Activated CD8-positive, alpha-beta T cell treated with anti-CD3 and anti-CD28 coated beads for 36 hours (primary cell): ENCODE measurements at regions of chr19 and their contacts with region 1.

Region 1: GRCh38 chr19:17282488-17283255 is 971 bp downstream of the ANKLE1 start:
- DNase-seq: peak; percentile 91
- ATAC-seq: peak; percentile 93
- H3K4me3 Mint-ChIP-seq: peak overlapping the region; percentile 86
- H3K27ac Mint-ChIP-seq: peak overlapping the region; percentile 81
- H3K4me1 Mint-ChIP-seq: peaks cover 6% of the 10 kb centered on the region
- H3K27me3 Mint-ChIP-seq: no peaks in the 10 kb centered on the region
- CTCF ChIP-seq: peak; percentile 99

Region 2: GRCh38 chr19:17215125-17215971 is 67.3 kb before region 1 on chr19 and contains the start of gene USE1:
- CTCF ChIA-PET with region 1: interaction called, 10 read pairs
- POLR2A ChIA-PET with region 1: interaction called, 3 read pairs
- intact Hi-C with region 1: no loop called
- DNase-seq: peak; percentile 95
- ATAC-seq: peak; percentile 96
- H3K4me3 Mint-ChIP-seq: peak within 1 kb of the TSS; percentile 82
- H3K27ac Mint-ChIP-seq: peak within 1 kb of the TSS; percentile 97
- H3K4me1 Mint-ChIP-seq: peaks cover 15% of the 10 kb centered on the region
- H3K27me3 Mint-ChIP-seq: no peaks in the 10 kb centered on the region
- CTCF ChIP-seq: no peak
- total RNA-seq, gene USE1: 26.5 to 27.1 TPM

Region 3: GRCh38 chr19:17245244-17245984 is 37.3 kb before region 1 on chr19 and contains the start of gene NR2F6:
- CTCF ChIA-PET with region 1: no interaction called
- POLR2A ChIA-PET with region 1: no interaction called
- intact Hi-C with region 1: no loop called
- DNase-seq: no peak
- ATAC-seq: peak; percentile 35
- H3K4me3 Mint-ChIP-seq: peak within 1 kb of the TSS; percentile 79
- H3K27ac Mint-ChIP-seq: peak within 1 kb of the TSS; percentile 64
- H3K4me1 Mint-ChIP-seq: peaks cover 9% of the 10 kb centered on the region
- H3K27me3 Mint-ChIP-seq: peaks cover 7% of the 10 kb centered on the region
- CTCF ChIP-seq: no peak
- total RNA-seq, gene NR2F6: 7.0 TPM

Region 4: DNA sequence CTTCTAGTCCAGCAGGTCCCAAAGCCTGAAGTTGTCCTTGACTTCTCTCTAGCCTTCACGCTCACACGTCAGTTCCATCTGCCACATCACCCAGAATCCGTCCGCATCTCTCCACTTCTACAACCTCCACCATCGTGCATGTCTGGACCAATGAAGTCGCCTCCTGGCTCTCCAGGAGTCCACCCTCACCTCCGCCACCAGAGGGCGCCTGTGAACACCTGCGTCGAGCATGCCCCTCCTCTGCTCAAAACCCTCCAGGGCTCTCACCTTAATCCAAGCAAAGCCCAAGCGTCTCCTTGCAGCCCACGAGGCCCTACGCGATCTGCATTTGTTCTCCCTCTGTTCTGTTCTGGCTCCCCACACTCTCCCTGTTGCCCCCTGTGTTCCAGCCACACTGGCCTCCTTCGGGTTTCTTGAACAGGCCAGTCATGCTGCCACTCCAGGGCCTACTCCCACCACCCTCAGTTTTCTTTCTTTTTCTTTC is 21.8 kb before region 1 on chr19:
- CTCF ChIA-PET with region 1: interaction called, 46 read pairs
- POLR2A ChIA-PET with region 1: interaction called, 36 read pairs
- intact Hi-C with region 1: no loop called
- DNase-seq: peak; percentile 94
- ATAC-seq: peak; percentile 100
- H3K4me3 Mint-ChIP-seq: no peak overlapping the region
- H3K27ac Mint-ChIP-seq: no peak overlapping the region
- H3K4me1 Mint-ChIP-seq: peaks cover 8% of the 10 kb centered on the region
- H3K27me3 Mint-ChIP-seq: no peaks in the 10 kb centered on the region
- CTCF ChIP-seq: peak; percentile 84

Region 5: GRCh38 chr19:17266975-17267788 is 15.5 kb before region 1 on chr19 and contains the start of gene BABAM1:
- CTCF ChIA-PET with region 1: interaction called, 46 read pairs
- POLR2A ChIA-PET with region 1: interaction called, 36 read pairs
- intact Hi-C with region 1: no loop called
- DNase-seq: peak; percentile 99
- ATAC-seq: peak; percentile 95
- H3K4me3 Mint-ChIP-seq: peak within 1 kb of the TSS; percentile 95
- H3K27ac Mint-ChIP-seq: peak within 1 kb of the TSS; percentile 90
- H3K4me1 Mint-ChIP-seq: peaks cover 15% of the 10 kb centered on the region
- H3K27me3 Mint-ChIP-seq: no peaks in the 10 kb centered on the region
- CTCF ChIP-seq: no peak
- total RNA-seq, gene BABAM1: 105 to 106 TPM

Region 6: GRCh38 chr19:17305517-17306284 is 23.0 kb after region 1 on chr19 and contains the start of gene MRPL34:
- CTCF ChIA-PET with region 1: interaction called, 14 read pairs
- POLR2A ChIA-PET with region 1: interaction called, 3 read pairs
- intact Hi-C with region 1: no loop called
- DNase-seq: peak; percentile 98
- ATAC-seq: peak; percentile 68
- H3K4me3 Mint-ChIP-seq: peak within 1 kb of the TSS; percentile 87
- H3K27ac Mint-ChIP-seq: peak within 1 kb of the TSS; percentile 92
- H3K4me1 Mint-ChIP-seq: peaks cover 37% of the 10 kb centered on the region
- H3K27me3 Mint-ChIP-seq: no peaks in the 10 kb centered on the region
- CTCF ChIP-seq: peak; percentile 81
- total RNA-seq, gene MRPL34: 101 to 107 TPM